ENCODE measurements at regions of chr5 and their contacts with region 1.

Region 1: GRCh38 chr5:40679155-40679913 is 381 bp upstream of the PTGER4 start:
- DNase-seq: peak; percentile 94 to 97 (median 95)
- ATAC-seq: peak; percentile 90 to 98 (median 95)
- H3K4me3 ChIP-seq: peak overlapping the region; percentile 54 to 96 (median 78)
- H3K27ac ChIP-seq: peak overlapping the region; percentile 43 to 97 (median 88)
- H3K4me1 ChIP-seq: peaks cover 0 to 45% (median 12%) of the 10 kb centered on the region in 12 donors
- H3K27me3 ChIP-seq: peaks cover 0 to 23% (median 3%) of the 10 kb centered on the region in 9 donors
- CTCF ChIP-seq: no peak
- POLR2A ChIP-seq: peak in 1 of 2 donors; percentile 37

Region 2: DNA sequence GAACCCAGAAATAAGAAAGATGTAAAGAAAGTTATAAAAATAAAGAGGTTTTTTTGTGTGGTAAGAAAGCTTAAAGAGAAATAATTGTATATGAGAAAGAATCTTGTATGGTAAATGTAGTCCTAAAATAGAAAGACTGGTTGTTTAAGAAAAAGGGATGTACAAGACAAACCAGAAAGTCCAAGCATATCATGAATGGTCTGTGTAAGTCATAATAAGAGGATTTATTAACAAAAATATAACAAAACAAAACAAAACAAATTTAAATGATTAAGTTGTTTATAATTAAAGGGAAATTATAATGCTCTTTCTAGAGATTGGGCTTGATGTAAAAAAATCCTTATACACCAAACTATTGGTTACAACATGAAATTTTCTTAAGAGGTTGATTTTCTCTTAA is 590.1 kb before region 1 on chr5:
- intact Hi-C with region 1: no loop called
- DNase-seq: no peak
- ATAC-seq: no peak
- H3K4me3 ChIP-seq: no peak overlapping the region
- H3K27ac ChIP-seq: no peak overlapping the region
- H3K4me1 ChIP-seq: no peaks in the 10 kb centered on the region
- H3K27me3 ChIP-seq: no peaks in the 10 kb centered on the region
- CTCF ChIP-seq: no peak
- POLR2A ChIP-seq: no peak

Region 3: GRCh38 chr5:40202814-40203440 is 476.4 kb before region 1 on chr5:
- intact Hi-C with region 1: loop called in 2 of 10 experiments (anchors 5 kb)
- DNase-seq: no peak
- ATAC-seq: peak in 2 of 4 donors; percentile 78 to 83
- H3K4me3 ChIP-seq: no peak overlapping the region
- H3K27ac ChIP-seq: peak overlapping the region in 10 of 12 donors; percentile 23 to 74 (median 52)
- H3K4me1 ChIP-seq: peaks cover 0 to 26% (median 8%) of the 10 kb centered on the region in 12 donors
- H3K27me3 ChIP-seq: no peaks in the 10 kb centered on the region
- CTCF ChIP-seq: no peak
- POLR2A ChIP-seq: no peak

Region 4: DNA sequence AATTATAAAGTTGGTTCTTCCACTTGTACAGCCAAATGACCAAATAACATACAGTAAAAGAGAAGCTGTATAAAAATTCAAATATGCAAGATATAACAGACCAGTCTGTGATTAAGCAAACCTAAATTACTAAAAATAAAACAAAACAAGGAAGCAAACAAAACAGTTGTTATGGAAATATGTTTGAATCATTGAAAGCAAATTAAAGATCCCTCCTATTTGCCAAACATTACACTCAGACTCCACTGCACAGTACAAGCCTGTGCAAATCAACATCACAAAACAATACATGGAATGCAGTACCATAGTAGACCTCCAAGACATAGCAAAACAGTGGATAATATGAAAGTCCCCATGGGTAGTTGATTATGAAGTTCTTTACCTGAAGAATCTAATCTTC is 287.7 kb before region 1 on chr5:
- intact Hi-C with region 1: loop called in 4 of 10 experiments (anchors 5 to 10 kb)
- DNase-seq: no peak
- ATAC-seq: peak in 2 of 4 donors; percentile 28 to 59
- H3K4me3 ChIP-seq: no peak overlapping the region
- H3K27ac ChIP-seq: peak overlapping the region in 7 of 12 donors; percentile 3 to 40 (median 22)
- H3K4me1 ChIP-seq: peaks cover 0 to 48% (median 7%) of the 10 kb centered on the region in 12 donors
- H3K27me3 ChIP-seq: no peaks in the 10 kb centered on the region
- CTCF ChIP-seq: peak in 1 of 12 donors; percentile 4
- POLR2A ChIP-seq: no peak

Region 5: GRCh38 chr5:40570408-40571129 is 108.8 kb before region 1 on chr5:
- intact Hi-C with region 1: loop called in 4 of 10 experiments (anchors 5 to 10 kb)
- DNase-seq: no peak
- ATAC-seq: peak in 3 of 4 donors; percentile 42 to 81 (median 68)
- H3K4me3 ChIP-seq: no peak overlapping the region
- H3K27ac ChIP-seq: peak overlapping the region in 8 of 12 donors; percentile 5 to 80 (median 58)
- H3K4me1 ChIP-seq: peaks cover 0 to 21% (median 0%) of the 10 kb centered on the region in 12 donors
- H3K27me3 ChIP-seq: no peaks in the 10 kb centered on the region
- CTCF ChIP-seq: no peak
- POLR2A ChIP-seq: no peak

Region 6: DNA sequence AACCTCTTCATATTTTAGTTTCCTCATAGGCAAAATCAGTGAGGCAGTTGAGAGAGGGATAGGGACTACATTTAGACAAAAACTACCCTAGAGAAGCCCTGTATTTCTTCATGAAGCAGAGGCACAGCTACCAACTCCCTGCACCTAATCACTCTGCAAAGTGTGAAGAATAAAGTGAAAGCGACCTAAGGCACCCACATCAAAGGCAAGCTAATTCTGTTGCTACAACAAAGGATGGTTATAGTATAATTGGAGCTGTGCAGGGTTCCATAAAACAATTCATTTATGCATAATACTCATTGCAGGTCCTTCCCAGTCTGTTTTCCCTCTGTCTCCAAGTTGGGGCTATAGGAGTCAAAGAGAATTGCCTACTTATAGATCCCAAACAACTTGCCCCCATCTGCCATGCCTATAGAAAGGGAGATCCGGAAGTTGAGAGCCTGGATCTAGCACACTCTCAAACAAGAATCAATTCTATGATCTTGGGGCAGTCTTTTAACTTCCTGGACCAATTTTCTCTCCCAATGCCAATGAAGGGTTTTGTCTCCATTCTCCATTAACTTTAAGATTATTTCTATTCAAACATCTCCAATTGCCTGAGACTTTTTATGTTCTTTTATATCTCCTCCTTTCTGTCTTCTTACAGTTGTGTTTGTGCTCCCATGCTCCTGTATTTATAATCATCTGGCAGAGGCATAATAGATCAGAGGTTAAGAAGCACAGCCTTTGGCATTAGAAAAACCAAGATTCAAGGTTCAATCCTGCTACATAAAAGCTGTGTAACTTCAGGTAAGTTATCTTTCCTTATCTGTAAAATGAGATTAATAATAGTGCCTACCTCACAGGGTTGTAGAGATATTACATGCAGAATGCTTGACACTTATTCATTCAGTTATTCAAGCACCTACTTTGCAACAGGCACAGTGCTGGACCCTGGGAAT is 55.6 kb before region 1 on chr5:
- intact Hi-C with region 1: loop called in 2 of 10 experiments (anchors 2 to 5 kb)
- DNase-seq: no peak
- ATAC-seq: no peak
- H3K4me3 ChIP-seq: no peak overlapping the region
- H3K27ac ChIP-seq: peak overlapping the region in 6 of 12 donors; percentile 49 to 70 (median 54)
- H3K4me1 ChIP-seq: peaks cover 0 to 42% (median 0%) of the 10 kb centered on the region in 12 donors
- H3K27me3 ChIP-seq: no peaks in the 10 kb centered on the region
- CTCF ChIP-seq: no peak
- POLR2A ChIP-seq: no peak

Region 7: DNA sequence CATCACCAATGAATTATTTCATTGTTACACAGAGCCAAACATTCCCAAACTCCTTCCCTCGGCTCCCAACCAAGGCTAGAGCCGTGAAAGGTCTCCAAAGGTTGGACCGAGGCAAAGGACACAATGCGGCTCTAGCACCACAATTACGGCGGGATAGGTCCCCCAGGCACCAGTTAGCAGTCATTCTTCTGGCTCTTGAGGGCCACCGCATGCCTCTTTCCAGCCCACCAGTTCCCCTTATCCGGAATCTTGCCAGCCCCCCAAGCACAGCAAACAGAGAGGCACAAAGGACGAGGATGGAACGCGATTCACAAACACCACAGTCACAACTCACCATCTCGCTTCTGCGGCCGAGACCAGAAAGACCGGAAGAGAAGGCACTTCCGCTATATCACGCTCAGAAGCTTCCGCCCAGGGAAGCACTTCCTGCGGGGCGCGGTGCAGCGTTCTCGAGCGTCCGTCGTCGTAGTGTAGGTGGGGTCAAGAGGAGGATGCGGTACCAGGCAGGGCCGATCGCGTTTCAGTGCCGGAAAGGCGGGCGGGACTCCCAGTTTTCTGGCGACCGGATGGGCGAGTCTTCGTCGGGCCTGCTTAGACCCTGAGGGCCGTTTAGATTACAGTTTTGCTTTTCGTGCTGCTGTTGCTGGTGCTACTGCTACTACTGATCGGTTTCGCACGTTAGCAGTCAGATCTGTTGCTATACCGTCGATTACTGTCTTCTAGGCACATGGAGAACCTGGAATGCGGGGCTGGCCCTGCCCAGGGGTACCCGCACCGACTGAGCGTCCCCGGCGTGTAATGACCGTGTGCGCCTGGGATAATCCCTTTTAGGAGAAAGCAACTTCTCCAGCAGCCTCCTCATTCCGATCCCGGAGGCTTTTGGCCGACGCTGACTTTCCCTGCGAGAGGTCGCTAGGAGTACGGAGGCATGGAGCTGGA is 155.8 kb after region 1 on chr5 and contains the start of gene RPL37:
- intact Hi-C with region 1: loop called in 1 of 10 experiments (anchors 5 kb)
- DNase-seq: peak; percentile 97 to 98 (median 97)
- ATAC-seq: peak; percentile 99 to 100 (median 100)
- H3K4me3 ChIP-seq: peak within 1 kb of the TSS; percentile 64 to 82 (median 74)
- H3K27ac ChIP-seq: peak within 1 kb of the TSS; percentile 93 to 99 (median 98)
- H3K4me1 ChIP-seq: peaks cover 0 to 40% (median 23%) of the 10 kb centered on the region in 12 donors
- H3K27me3 ChIP-seq: no peaks in the 10 kb centered on the region
- CTCF ChIP-seq: no peak
- POLR2A ChIP-seq: peak in 1 of 2 donors; percentile 75
- total RNA-seq, gene RPL37: 32.7 to 838 (median 595) TPM

Measured in heart left ventricle (tissue), 16 donors.